ENCODE measurements at regions of chr16 and their contacts with region 1.

Region 1: GRCh38 chr16:27690608-27691007 is 140.7 kb downstream of the KATNIP start:
- DNase-seq: no peak
- H3K4me3 ChIP-seq: no peak overlapping the region
- H3K27ac ChIP-seq: peak overlapping the region in 1 of 3 donors; percentile 18
- H3K4me1 ChIP-seq: peaks cover 0 to 3% of the 10 kb centered on the region in 2 donors
- H3K27me3 ChIP-seq: no peaks in the 10 kb centered on the region
- CTCF ChIP-seq: peak in 4 of 6 experiments; percentile 29 to 44 (median 35)
- POLR2A ChIP-seq: no peak

Region 2: DNA sequence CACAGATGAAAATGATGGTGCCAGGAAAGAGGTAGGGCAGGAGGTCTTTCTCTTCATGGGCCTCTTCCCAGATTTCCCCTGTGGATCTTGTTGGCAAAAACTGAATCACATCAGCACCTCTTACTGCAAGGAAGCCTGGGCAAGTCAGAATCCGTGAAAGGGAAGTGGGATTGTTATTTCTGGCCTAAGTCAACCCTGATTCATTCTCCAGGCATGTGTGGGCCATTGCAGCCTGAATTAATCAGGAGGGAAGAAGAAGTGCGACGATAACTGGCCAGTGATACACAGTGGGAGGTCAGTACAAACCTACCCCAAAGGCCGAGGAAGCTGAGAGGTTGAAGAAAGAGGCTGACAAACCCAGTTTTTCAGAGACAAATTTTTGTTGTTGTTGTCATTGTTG is 404.2 kb before region 1 on chr16:
- intact Hi-C with region 1: no loop called
- DNase-seq: no peak
- H3K4me3 ChIP-seq: no peak overlapping the region
- H3K27ac ChIP-seq: no peak overlapping the region
- H3K4me1 ChIP-seq: peaks cover 0 to 6% of the 10 kb centered on the region in 2 donors
- H3K27me3 ChIP-seq: no peaks in the 10 kb centered on the region
- CTCF ChIP-seq: no peak
- POLR2A ChIP-seq: no peak

Region 3: DNA sequence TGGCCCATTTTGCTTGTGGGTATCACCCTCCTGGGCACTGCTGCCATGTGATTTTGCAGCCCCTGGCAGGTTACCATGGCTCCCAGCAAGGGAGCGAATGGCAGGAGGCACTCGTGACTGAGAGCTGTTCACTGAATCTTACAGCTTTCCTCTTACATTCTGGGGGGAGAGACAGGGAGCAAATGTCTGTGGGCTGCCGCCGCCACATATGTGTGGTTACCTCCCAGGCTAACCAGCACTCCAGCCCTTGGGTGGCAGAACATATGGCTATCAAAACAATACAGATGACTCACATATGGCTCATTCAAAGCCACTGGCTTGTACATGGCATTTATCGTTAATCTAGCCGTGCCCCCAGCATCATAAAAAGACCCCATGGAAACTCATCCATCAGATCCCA is 160.6 kb before region 1 on chr16:
- intact Hi-C with region 1: no loop called
- DNase-seq: no peak
- H3K4me3 ChIP-seq: no peak overlapping the region
- H3K27ac ChIP-seq: no peak overlapping the region
- H3K4me1 ChIP-seq: no peaks in the 10 kb centered on the region
- H3K27me3 ChIP-seq: no peaks in the 10 kb centered on the region
- CTCF ChIP-seq: no peak
- POLR2A ChIP-seq: no peak

Region 4: GRCh38 chr16:27639561-27640276 is 50.9 kb before region 1 on chr16:
- intact Hi-C with region 1: no loop called
- DNase-seq: peak in 1 of 2 donors; percentile 32
- H3K4me3 ChIP-seq: no peak overlapping the region
- H3K27ac ChIP-seq: peak overlapping the region; percentile 36 to 76 (median 41)
- H3K4me1 ChIP-seq: peaks cover 28 to 47% of the 10 kb centered on the region in 2 donors
- H3K27me3 ChIP-seq: no peaks in the 10 kb centered on the region
- CTCF ChIP-seq: peak in 4 of 6 experiments; percentile 20 to 55 (median 48)
- POLR2A ChIP-seq: no peak

Region 5: DNA sequence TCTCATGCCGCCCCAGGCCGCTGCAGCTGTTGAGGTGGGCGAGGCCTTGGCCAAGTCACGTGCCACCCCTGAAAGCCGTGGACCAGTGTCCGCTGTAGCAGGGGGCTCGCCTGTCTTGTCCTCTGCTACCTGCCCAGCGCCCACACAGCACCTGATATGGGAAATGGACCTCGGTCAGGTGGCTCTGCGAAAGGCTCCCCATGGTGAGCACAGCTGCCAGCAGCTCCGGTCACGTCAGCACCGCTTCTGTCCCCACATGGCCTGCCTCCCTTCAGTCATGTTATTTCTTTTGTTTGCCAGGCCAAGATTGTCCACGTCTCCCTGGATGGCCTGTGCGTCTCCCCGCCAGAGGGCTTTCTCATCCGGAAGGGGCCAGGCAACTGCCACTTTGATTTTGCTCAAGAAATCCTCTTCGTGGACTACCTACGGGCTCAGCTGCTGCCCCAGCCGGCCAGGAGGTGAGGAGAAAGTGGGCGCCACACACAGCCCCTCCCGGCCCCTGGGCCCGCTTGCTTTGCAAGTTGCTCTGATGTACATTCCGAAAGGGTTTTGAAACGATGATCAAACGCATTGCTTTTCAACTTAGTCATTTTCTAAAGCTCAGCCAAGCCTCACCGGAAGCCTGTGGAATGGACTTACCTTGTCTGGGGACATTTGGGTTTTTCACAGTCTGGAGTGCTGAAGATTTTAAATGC is 79.1 kb after region 1 on chr16:
- intact Hi-C with region 1: no loop called
- DNase-seq: peak; percentile 74 to 77
- H3K4me3 ChIP-seq: no peak overlapping the region
- H3K27ac ChIP-seq: peak overlapping the region; percentile 46 to 77 (median 58)
- H3K4me1 ChIP-seq: peaks cover 0 to 17% of the 10 kb centered on the region in 2 donors
- H3K27me3 ChIP-seq: no peaks in the 10 kb centered on the region
- CTCF ChIP-seq: no peak
- POLR2A ChIP-seq: no peak

Region 6: GRCh38 chr16:27867122-27868110 is 176.8 kb after region 1 on chr16:
- intact Hi-C with region 1: loop called (anchors 5 kb)
- DNase-seq: peak; percentile 75 to 77
- H3K4me3 ChIP-seq: no peak overlapping the region
- H3K27ac ChIP-seq: no peak overlapping the region
- H3K4me1 ChIP-seq: no peaks in the 10 kb centered on the region
- H3K27me3 ChIP-seq: no peaks in the 10 kb centered on the region
- CTCF ChIP-seq: peak; percentile 19 to 72 (median 48)
- POLR2A ChIP-seq: no peak

Measured in thyroid gland (tissue), 4 donors.